Prostate gland (tissue), 2 donors: ENCODE measurements at regions of chr3 and their contacts with region 1.

Region 1: DNA sequence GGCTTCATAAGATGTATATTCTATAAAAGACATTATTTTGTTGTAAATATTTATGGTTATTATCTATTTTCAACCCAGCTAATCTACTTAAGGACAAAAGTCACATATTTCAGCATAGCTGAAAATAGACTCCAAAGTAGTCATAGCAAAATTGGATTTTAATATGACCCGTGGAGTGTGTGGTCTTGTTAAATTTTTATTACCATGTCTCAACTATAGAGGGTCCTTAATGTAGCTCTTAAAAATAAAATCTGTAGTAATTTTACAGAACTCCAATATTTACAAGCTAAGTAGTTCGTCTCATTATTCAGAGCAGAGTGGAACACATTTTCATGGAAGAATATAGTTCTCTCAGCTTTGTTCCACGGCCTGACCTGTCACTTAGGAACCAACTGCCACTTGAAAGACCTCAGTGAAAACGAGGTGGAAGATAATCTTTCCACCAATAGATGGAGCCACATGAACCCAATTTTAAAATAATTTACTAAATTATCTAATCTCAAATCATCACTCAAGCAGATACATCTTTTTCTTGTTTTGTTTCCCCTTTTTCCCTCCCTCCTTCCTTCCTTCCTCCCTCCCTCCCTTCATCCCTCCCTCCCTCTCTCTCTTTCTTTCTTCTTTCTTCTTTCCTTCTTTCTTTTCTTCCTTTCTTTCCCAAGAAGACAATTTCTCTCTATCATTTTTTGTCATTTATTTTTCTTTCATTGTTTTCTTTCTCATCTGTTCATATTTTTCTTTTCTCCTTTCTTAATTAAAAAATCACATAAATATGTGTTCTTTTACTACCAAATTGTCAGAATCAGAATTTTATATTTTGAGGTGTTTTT is 97.2 kb downstream of the CLDN1 start:
- DNase-seq: peak; percentile 25
- H3K4me3 ChIP-seq: no peak overlapping the region
- H3K27ac ChIP-seq: no peak overlapping the region
- H3K4me1 ChIP-seq: no peaks in the 10 kb centered on the region
- H3K27me3 ChIP-seq: no peaks in the 10 kb centered on the region
- CTCF ChIP-seq: peak in 3 of 4 experiments; percentile 34 to 51 (median 45)
- POLR2A ChIP-seq: no peak

Region 2: GRCh38 chr3:189995129-189995528 is 229.9 kb before region 1 on chr3:
- intact Hi-C with region 1: no loop called
- DNase-seq: no peak
- H3K4me3 ChIP-seq: no peak overlapping the region
- H3K27ac ChIP-seq: no peak overlapping the region
- H3K4me1 ChIP-seq: no peaks in the 10 kb centered on the region
- H3K27me3 ChIP-seq: no peaks in the 10 kb centered on the region
- CTCF ChIP-seq: no peak
- POLR2A ChIP-seq: no peak

Region 3: GRCh38 chr3:190424478-190425439 is 199.7 kb after region 1 on chr3:
- intact Hi-C with region 1: loop called (anchors 10 kb)
- DNase-seq: peak; percentile 28
- H3K4me3 ChIP-seq: no peak overlapping the region
- H3K27ac ChIP-seq: no peak overlapping the region
- H3K4me1 ChIP-seq: no peaks in the 10 kb centered on the region
- H3K27me3 ChIP-seq: no peaks in the 10 kb centered on the region
- CTCF ChIP-seq: peak in 3 of 4 experiments; percentile 58 to 70 (median 65)
- POLR2A ChIP-seq: no peak